Activated T-helper 2 cell treated with anti-CD3 and anti-CD28 coated beads, Interferon-gamma antibody, Interleukin-2, Interleukin-4, amounts not matched to agents 10 μg/mL and 5 μg/mL and 100 μg/mL, durations not matched to agents 14 hours and 24 hours and 36 hours (primary cell): ENCODE measurements at regions of chr15 and their contacts with region 1.

Region 1: GRCh38 chr15:67024314-67024997 is 40.9 kb upstream of the SMAD3 start:
- DNase-seq: no peak
- H3K4me3 Mint-ChIP-seq: peak overlapping the region; percentile 6
- H3K27ac Mint-ChIP-seq: no peak overlapping the region
- H3K4me1 Mint-ChIP-seq: peaks cover 38% of the 10 kb centered on the region
- H3K27me3 Mint-ChIP-seq: peaks cover 18% of the 10 kb centered on the region

Region 2: DNA sequence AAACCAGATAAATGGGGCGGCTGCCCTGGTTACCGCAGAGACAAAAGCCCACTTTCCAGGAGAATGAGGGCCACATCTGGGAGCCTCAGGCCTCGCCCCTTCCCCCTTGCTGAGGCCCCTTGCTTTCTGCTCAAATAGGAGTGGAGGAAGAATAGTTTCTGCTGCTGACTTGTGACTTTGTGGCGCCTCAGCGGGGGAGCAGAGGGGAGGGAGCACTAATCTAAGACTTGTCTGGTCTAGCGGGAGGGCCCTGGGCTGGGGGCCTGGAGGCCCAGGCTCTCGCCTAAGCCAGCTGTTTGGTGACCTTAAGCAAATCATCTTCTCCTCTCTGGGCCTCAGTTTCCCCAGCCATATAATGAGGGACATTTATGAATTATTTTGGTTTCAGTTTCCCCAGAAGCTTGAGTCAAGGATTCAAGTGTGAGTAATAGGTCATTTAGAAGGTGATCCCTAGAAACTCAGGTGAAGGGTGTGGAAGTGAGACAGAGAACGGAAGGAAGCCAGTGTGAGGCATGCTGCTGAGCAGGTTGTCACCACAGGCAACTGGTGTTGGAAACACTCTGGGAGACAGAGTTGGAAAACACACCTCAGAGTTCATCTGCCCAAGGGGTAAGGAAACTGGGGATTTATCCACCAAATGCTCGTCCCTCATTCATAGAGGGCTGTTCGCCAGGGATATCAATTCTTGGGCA is 15.1 kb after region 1 on chr15:
- intact Hi-C with region 1: loop called (anchors 2 kb)
- DNase-seq: no peak
- H3K4me3 Mint-ChIP-seq: peak overlapping the region; percentile 33
- H3K27ac Mint-ChIP-seq: peak overlapping the region; percentile 24
- H3K4me1 Mint-ChIP-seq: peaks cover 14% of the 10 kb centered on the region
- H3K27me3 Mint-ChIP-seq: no peaks in the 10 kb centered on the region